Colonic mucosa (tissue), 4 donors: ENCODE measurements at regions of chr9 and their contacts with region 1.

Region 1: GRCh38 chr9:83622939-83623678 is at the start of gene IDNK:
- DNase-seq: peak; percentile 85
- H3K4me3 ChIP-seq: peak within 1 kb of the TSS; percentile 95
- H3K27ac ChIP-seq: peak within 1 kb of the TSS; percentile 96
- H3K4me1 ChIP-seq: peaks cover 3% of the 10 kb centered on the region
- H3K27me3 ChIP-seq: no peaks in the 10 kb centered on the region
- CTCF ChIP-seq: no peak
- total RNA-seq, gene IDNK: 4.9 to 7.4 TPM

Region 2: GRCh38 chr9:83024506-83025503 is 598.3 kb before region 1 on chr9:
- intact Hi-C with region 1: no loop called
- DNase-seq: no peak
- H3K4me3 ChIP-seq: no peak overlapping the region
- H3K27ac ChIP-seq: no peak overlapping the region
- H3K4me1 ChIP-seq: no peaks in the 10 kb centered on the region
- H3K27me3 ChIP-seq: no peaks in the 10 kb centered on the region
- CTCF ChIP-seq: no peak

Region 3: GRCh38 chr9:83572524-83572923 is 50.6 kb before region 1 on chr9:
- intact Hi-C with region 1: no loop called
- DNase-seq: no peak
- H3K4me3 ChIP-seq: no peak overlapping the region
- H3K27ac ChIP-seq: no peak overlapping the region
- H3K4me1 ChIP-seq: no peaks in the 10 kb centered on the region
- H3K27me3 ChIP-seq: no peaks in the 10 kb centered on the region
- CTCF ChIP-seq: no peak

Region 4: DNA sequence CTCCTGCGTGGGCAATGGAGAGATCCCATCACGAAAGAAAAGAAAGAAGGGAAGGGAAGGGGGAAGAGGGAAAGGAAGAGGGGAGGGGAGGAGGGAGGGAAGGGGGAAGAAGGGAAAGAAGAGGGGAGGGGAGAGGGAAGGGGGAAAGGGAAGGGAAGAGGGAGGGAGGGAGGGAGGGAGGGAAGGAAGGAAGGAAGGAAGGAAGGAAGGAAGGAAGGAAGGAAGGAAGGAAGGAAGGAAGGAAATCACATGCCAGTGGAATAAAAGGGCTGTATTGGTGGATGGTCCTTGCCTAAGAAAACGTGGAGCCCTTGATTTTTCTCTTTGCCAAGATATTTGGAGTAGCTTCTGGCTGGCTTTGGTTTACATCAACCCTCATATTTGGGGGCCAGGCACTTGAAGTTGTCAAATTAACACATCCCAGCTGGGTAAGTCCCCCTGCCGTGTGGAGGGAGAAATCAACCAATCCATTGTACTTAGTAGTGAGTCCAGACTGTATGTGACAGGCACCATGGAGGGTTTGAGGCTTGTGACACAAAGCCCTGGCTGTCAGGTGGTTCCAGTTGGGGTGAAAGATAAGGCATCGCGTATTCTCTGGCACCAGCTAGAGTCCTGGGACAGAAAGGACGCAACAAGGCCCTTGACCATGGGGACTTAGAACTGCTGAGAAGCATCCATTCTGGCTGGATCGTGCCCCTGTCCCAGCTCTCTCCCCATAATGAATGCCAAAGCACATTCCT is 23.6 kb after region 1 on chr9:
- intact Hi-C with region 1: loop called (anchors 2 kb)
- DNase-seq: no peak
- H3K4me3 ChIP-seq: no peak overlapping the region
- H3K27ac ChIP-seq: no peak overlapping the region
- H3K4me1 ChIP-seq: no peaks in the 10 kb centered on the region
- H3K27me3 ChIP-seq: no peaks in the 10 kb centered on the region
- CTCF ChIP-seq: no peak

Region 5: GRCh38 chr9:83919111-83919510 is 296.0 kb after region 1 on chr9:
- intact Hi-C with region 1: loop called (anchors 10 kb)
- DNase-seq: no peak
- H3K4me3 ChIP-seq: no peak overlapping the region
- H3K27ac ChIP-seq: no peak overlapping the region
- H3K4me1 ChIP-seq: no peaks in the 10 kb centered on the region
- H3K27me3 ChIP-seq: no peaks in the 10 kb centered on the region
- CTCF ChIP-seq: no peak